ENCODE measurements at regions of chr17 and their contacts with region 1.

Region 1: GRCh38 chr17:8079291-8080207 is 8.0 kb downstream of the ALOX12B start:
- DNase-seq: peak; percentile 92
- ATAC-seq: peak; percentile 94
- H3K4me3 Mint-ChIP-seq: peak overlapping the region; percentile 94
- H3K27ac Mint-ChIP-seq: peak overlapping the region; percentile 92
- H3K4me1 Mint-ChIP-seq: peaks cover 12% of the 10 kb centered on the region
- H3K27me3 Mint-ChIP-seq: peaks cover 5% of the 10 kb centered on the region

Region 2: GRCh38 chr17:7462474-7463371 is 616.8 kb before region 1 on chr17:
- CTCF ChIA-PET with region 1: no interaction called
- POLR2A ChIA-PET with region 1: no interaction called
- intact Hi-C with region 1: no loop called
- DNase-seq: no peak
- ATAC-seq: no peak
- H3K4me3 Mint-ChIP-seq: no peak overlapping the region
- H3K27ac Mint-ChIP-seq: no peak overlapping the region
- H3K4me1 Mint-ChIP-seq: peaks cover 9% of the 10 kb centered on the region
- H3K27me3 Mint-ChIP-seq: no peaks in the 10 kb centered on the region

Region 3: DNA sequence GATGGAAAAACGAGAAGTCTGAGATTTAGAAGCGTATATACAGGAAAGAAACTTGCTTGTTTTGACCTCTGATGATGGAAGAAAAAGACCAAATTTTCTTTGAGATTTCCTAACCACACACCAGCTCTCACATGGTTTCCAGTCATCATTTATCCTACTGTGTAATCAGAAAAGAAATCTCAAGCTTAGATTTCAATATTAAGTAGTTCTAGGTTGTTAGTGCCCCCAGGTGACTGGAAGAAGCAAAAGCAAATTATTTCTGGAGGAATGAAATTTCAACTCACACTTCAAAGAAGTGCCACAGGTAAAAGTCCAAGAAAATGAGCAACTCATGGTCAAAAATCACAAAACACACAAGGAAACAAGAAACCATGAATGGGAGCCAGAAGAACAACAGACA is 297.3 kb before region 1 on chr17:
- CTCF ChIA-PET with region 1: no interaction called
- POLR2A ChIA-PET with region 1: no interaction called
- intact Hi-C with region 1: no loop called
- DNase-seq: no peak
- ATAC-seq: no peak
- H3K4me3 Mint-ChIP-seq: no peak overlapping the region
- H3K27ac Mint-ChIP-seq: no peak overlapping the region
- H3K4me1 Mint-ChIP-seq: no peaks in the 10 kb centered on the region
- H3K27me3 Mint-ChIP-seq: peaks cover 7% of the 10 kb centered on the region

Region 4: GRCh38 chr17:8091033-8091687 is 11.6 kb after region 1 on chr17:
- CTCF ChIA-PET with region 1: interaction called, 22 read pairs
- POLR2A ChIA-PET with region 1: interaction called, 3 read pairs
- intact Hi-C with region 1: no loop called
- DNase-seq: no peak
- ATAC-seq: no peak
- H3K4me3 Mint-ChIP-seq: no peak overlapping the region
- H3K27ac Mint-ChIP-seq: no peak overlapping the region
- H3K4me1 Mint-ChIP-seq: peaks cover 14% of the 10 kb centered on the region
- H3K27me3 Mint-ChIP-seq: peaks cover 5% of the 10 kb centered on the region

Region 5: DNA sequence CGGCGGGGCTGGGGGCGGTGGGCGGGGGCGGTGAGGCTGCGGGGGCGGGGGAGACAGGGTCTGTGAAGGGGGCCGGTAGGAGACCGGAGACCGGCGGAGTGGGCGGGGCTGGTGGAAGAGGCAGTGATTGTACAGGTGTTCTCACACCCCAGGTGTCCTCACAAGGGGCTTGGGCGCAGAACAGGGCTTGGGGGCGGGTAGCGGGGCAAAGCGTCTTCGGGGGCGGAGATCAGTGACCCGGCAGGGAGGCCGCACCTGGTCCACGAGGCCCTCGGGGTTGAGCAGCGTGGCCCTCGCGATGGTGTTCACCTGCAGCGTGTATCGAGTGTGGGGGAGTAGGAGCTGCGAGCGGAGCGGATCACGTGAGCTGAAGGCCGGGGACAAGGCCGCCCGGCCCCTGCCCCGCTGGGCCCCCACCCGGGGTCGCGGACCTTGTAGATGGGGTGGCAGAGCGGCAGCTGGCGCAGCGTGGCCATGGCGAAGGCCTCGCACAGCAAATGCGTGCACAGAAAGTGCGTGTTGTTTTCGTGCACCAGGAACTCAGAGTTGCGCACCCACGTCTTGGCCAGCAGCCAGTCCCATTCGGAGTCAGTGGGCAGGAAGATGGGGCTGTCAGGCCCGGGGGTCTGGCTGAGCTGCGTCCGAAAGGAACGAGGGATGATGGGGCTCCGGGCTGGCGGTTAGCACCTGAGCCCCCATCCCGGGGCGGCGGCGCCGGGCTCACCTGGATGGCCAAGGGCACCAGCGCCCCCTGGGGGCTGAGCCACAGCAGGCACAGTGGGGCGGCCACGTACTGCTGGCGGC is 30.3 kb after region 1 on chr17:
- CTCF ChIA-PET with region 1: interaction called, 41 read pairs
- POLR2A ChIA-PET with region 1: no interaction called
- intact Hi-C with region 1: loop called (anchors 1 kb)
- DNase-seq: peak; percentile 90
- ATAC-seq: peak; percentile 97
- H3K4me3 Mint-ChIP-seq: peak overlapping the region; percentile 34
- H3K27ac Mint-ChIP-seq: no peak overlapping the region
- H3K4me1 Mint-ChIP-seq: peaks cover 5% of the 10 kb centered on the region
- H3K27me3 Mint-ChIP-seq: peaks cover 19% of the 10 kb centered on the region

Region 6: GRCh38 chr17:8376271-8377067 is 296.9 kb after region 1 on chr17 and contains the start of gene KRABD2:
- CTCF ChIA-PET with region 1: no interaction called
- POLR2A ChIA-PET with region 1: no interaction called
- intact Hi-C with region 1: loop called in 1 of 2 experiments (anchors 2 kb)
- DNase-seq: peak; percentile 95
- ATAC-seq: peak; percentile 99
- H3K4me3 Mint-ChIP-seq: peak within 1 kb of the TSS; percentile 81
- H3K27ac Mint-ChIP-seq: peak within 1 kb of the TSS; percentile 87
- H3K4me1 Mint-ChIP-seq: peaks cover 55% of the 10 kb centered on the region
- H3K27me3 Mint-ChIP-seq: no peaks in the 10 kb centered on the region

Region 7: DNA sequence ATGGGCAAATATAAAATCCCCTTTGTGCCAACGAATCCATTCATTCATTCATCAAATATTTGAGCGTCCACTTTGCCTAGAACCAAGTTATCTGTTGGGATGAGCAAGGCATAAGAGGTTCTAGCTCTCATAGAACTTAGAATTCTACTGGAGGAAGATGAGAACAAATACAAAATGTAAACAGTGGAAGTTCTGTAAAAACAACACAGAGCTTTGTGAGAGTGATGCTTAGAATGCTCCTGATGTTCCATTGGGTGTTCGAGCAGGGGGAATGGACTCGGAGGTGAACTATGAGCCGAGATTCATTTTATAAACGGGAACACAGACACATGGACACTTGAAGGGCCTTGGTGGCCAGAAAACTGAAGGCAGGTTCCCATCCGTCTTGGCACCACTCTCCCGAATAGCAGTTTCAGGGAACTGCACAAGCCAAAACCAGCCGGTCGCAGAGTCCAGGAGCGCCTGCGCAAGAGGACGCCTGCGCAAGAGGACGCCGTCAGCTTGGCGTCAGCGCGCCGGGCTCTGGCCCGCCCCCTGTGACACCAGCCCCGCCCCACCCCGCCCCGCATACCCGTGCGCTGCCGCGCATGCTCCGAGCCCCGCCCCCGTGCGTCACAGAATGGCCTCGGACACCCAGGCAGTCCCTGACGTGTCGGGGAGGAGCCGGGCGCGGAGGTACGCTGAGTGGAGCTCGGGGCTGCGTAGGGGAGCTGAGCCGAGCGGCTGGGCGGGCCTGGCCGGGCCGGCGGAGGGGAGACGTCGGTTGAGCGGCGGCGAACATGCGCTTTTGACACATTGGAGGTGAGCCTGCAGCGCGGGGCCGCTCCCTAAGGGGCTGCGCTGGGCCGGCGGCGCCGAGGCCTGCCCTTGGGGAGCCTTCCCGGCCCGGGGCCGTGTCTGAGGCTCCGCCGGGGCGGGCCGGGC is 356.0 kb after region 1 on chr17 and contains the start of gene NDEL1:
- CTCF ChIA-PET with region 1: no interaction called
- POLR2A ChIA-PET with region 1: no interaction called
- intact Hi-C with region 1: no loop called
- DNase-seq: peak; percentile 100
- ATAC-seq: peak; percentile 98
- H3K4me3 Mint-ChIP-seq: peak within 1 kb of the TSS; percentile 87
- H3K27ac Mint-ChIP-seq: peak within 1 kb of the TSS; percentile 91
- H3K4me1 Mint-ChIP-seq: peaks cover 29% of the 10 kb centered on the region
- H3K27me3 Mint-ChIP-seq: no peaks in the 10 kb centered on the region
- total RNA-seq, gene NDEL1: 51.9 to 58.6 TPM

Region 8: DNA sequence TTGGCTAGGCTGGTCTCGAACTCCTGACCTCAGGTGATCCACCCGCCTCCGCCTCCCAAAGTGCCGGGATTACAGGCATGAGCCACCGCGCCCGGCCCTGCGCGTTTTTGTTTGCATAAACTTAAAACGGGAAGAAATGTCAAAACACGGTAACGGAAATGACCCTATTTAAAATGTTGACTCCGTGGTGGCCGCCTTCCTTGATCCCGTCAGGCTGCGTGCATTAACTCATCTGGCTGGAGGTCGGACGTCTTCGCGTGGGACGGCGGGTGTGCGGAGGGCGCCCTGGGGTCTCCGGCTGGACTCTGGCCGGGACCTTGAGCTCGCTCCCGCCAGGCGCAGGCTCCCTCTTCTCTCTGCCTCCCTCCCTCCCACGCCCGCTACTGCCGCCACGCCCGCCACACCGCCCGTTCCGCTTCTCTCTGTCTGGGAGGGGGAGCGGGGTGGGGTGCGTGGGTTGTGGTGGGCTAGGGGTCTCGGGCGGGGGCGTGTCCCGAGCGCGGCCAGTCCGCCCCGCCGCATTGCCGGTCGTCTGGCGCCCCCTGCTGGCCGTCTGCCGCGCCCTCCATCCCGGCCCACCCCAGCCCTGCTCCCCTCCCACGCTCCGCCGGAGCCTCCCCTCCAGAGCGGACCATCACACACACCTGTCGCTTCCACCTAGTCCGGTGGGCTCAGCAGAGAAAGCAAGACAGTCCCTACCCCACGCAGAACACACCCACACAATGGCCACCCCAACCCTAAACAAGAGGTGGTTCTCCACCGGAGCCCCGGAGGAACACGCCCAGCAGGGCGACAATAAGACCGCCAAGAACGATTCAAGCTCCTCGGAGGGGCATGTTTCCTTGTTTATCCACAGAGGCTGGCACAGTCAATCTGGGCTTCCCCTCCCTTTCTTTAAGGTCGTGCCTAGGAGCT is 666.3 kb after region 1 on chr17:
- CTCF ChIA-PET with region 1: no interaction called
- POLR2A ChIA-PET with region 1: no interaction called
- intact Hi-C with region 1: loop called in 1 of 2 experiments (anchors 10 kb)
- DNase-seq: peak; percentile 87
- ATAC-seq: peak; percentile 83
- H3K4me3 Mint-ChIP-seq: peak overlapping the region; percentile 77
- H3K27ac Mint-ChIP-seq: peak overlapping the region; percentile 79
- H3K4me1 Mint-ChIP-seq: peaks cover 3% of the 10 kb centered on the region
- H3K27me3 Mint-ChIP-seq: no peaks in the 10 kb centered on the region